IMR-90 (cell line): ENCODE measurements at regions of chr6 and their contacts with region 1.

Region 1: DNA sequence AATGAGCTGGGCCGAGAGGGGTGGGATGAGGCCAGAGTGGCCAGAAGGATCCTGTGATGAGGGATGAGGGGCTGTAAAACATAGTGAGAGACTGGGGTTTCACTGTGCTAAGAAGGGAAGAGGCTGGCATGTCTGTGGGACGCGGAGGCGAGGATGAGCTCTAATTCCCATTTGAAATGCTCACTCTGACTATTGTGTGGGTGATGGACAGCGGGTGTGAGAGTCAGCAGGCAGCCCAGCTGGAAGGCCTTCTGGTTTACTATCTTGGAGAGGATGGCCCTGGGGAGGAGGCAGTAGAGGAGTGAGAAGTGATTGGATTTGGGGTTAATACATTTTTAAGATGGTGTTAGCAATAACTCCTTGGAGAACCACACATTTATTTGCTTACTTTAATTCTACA is 9.5 kb upstream of the MICA start:
- DNase-seq: peak; percentile 41
- ATAC-seq: peak; percentile 48
- H3K4me3 ChIP-seq: no peak overlapping the region
- H3K27ac ChIP-seq: no peak overlapping the region
- H3K4me1 ChIP-seq: no peaks in the 10 kb centered on the region
- H3K27me3 ChIP-seq: no peaks in the 10 kb centered on the region
- CTCF ChIP-seq: no peak
- POLR2A ChIP-seq: no peak
- RAD21 ChIP-seq: no peak

Region 2: GRCh38 chr6:31776989-31777666 is 383.2 kb after region 1 on chr6 and contains the start of gene VWA7:
- CTCF ChIA-PET with region 1: no interaction called
- POLR2A ChIA-PET with region 1: no interaction called
- dilution Hi-C with region 1: no loop called
- in situ Hi-C with region 1: no loop called
- intact Hi-C with region 1: no loop called
- DNase-seq: peak; percentile 70
- ATAC-seq: peak; percentile 84
- H3K4me3 ChIP-seq: no peak within 1 kb of the TSS
- H3K27ac ChIP-seq: no peak within 1 kb of the TSS
- H3K4me1 ChIP-seq: peaks cover 10% of the 10 kb centered on the region
- H3K27me3 ChIP-seq: no peaks in the 10 kb centered on the region
- CTCF ChIP-seq: no peak
- POLR2A ChIP-seq: no peak
- RAD21 ChIP-seq: no peak
- total RNA-seq, gene VWA7: under 0.01 and 0.28 TPM in 2 replicates

Region 3: GRCh38 chr6:32234934-32235333 is 841.0 kb after region 1 on chr6:
- CTCF ChIA-PET with region 1: no interaction called
- POLR2A ChIA-PET with region 1: interaction called, 13 read pairs
- dilution Hi-C with region 1: no loop called
- in situ Hi-C with region 1: no loop called
- intact Hi-C with region 1: no loop called
- DNase-seq: no peak
- ATAC-seq: no peak
- H3K4me3 ChIP-seq: no peak overlapping the region
- H3K27ac ChIP-seq: no peak overlapping the region
- H3K4me1 ChIP-seq: no peaks in the 10 kb centered on the region
- H3K27me3 ChIP-seq: peaks cover 2% of the 10 kb centered on the region
- CTCF ChIP-seq: no peak
- POLR2A ChIP-seq: no peak
- RAD21 ChIP-seq: no peak